Panc1 (cell line): ENCODE measurements at regions of chr4 and their contacts with region 1.

Region 1: GRCh38 chr4:170391066-170391740 is 301.4 kb upstream of the AADAT start:
- DNase-seq: no peak
- ATAC-seq: no peak
- H3K4me3 ChIP-seq: no peak overlapping the region
- H3K27ac ChIP-seq: no peak overlapping the region
- H3K4me1 ChIP-seq: no peaks in the 10 kb centered on the region
- H3K27me3 ChIP-seq: no peaks in the 10 kb centered on the region
- CTCF ChIP-seq: no peak

Region 2: GRCh38 chr4:170336238-170336775 is 54.9 kb before region 1 on chr4:
- CTCF ChIA-PET with region 1: no interaction called
- POLR2A ChIA-PET with region 1: no interaction called
- in situ Hi-C with region 1: no loop called
- intact Hi-C with region 1: no loop called
- DNase-seq: no peak
- ATAC-seq: no peak
- H3K4me3 ChIP-seq: no peak overlapping the region
- H3K27ac ChIP-seq: no peak overlapping the region
- H3K4me1 ChIP-seq: no peaks in the 10 kb centered on the region
- H3K27me3 ChIP-seq: no peaks in the 10 kb centered on the region
- CTCF ChIP-seq: no peak

Region 3: DNA sequence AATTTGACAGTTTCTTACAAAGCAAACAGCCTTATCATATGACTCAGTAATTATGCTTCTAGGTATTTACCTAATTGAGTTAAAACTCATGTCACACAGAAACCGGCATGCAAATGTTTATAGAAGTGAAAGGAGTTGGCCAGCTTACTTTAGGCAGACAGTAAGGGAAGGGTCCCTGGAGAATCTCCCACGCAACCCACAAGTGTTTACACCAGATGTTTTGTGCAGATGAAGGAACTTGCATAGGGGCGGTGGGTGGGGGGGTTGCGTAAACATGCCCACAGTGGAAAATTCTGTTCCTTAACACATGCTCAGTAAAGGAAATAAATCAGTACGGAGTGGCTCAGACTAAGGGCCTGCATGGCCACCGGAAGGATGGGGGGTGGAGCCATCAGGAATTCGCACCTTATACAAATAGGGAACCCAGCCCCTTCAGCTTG is 29.1 kb after region 1 on chr4:
- CTCF ChIA-PET with region 1: no interaction called
- POLR2A ChIA-PET with region 1: interaction called, 14 read pairs
- in situ Hi-C with region 1: no loop called
- intact Hi-C with region 1: no loop called
- DNase-seq: no peak
- ATAC-seq: 0 out of 2 replicates have a peak, but pooled peaks have one; percentile 30
- H3K4me3 ChIP-seq: no peak overlapping the region
- H3K27ac ChIP-seq: no peak overlapping the region
- H3K4me1 ChIP-seq: no peaks in the 10 kb centered on the region
- H3K27me3 ChIP-seq: no peaks in the 10 kb centered on the region
- CTCF ChIP-seq: no peak